ENCODE measurements at regions of chr15 and their contacts with region 1.

Region 1: GRCh38 chr15:74322181-74323076 is 45.0 kb downstream of the CYP11A1 start:
- DNase-seq: peak; percentile 66 to 87 (median 86)
- ATAC-seq: peak; percentile 53 to 66
- H3K4me3 ChIP-seq: no peak overlapping the region
- H3K27ac ChIP-seq: no peak overlapping the region
- H3K4me1 ChIP-seq: peaks cover 4% of the 10 kb centered on the region
- H3K27me3 ChIP-seq: no peaks in the 10 kb centered on the region

Region 2: GRCh38 chr15:73972984-73973682 is 349.3 kb before region 1 on chr15:
- intact Hi-C with region 1: loop called in 3 of 4 experiments (anchors 5 to 10 kb)
- DNase-seq: peak; percentile 86 to 95 (median 92)
- ATAC-seq: peak; percentile 90 to 93
- H3K4me3 ChIP-seq: no peak overlapping the region
- H3K27ac ChIP-seq: no peak overlapping the region
- H3K4me1 ChIP-seq: no peaks in the 10 kb centered on the region
- H3K27me3 ChIP-seq: no peaks in the 10 kb centered on the region

Region 3: GRCh38 chr15:74053941-74054529 is 268.4 kb before region 1 on chr15:
- intact Hi-C with region 1: loop called in 2 of 4 experiments (anchors 5 to 10 kb)
- DNase-seq: peak; percentile 80 to 91 (median 89)
- ATAC-seq: peak; percentile 82 to 85
- H3K4me3 ChIP-seq: no peak overlapping the region
- H3K27ac ChIP-seq: no peak overlapping the region
- H3K4me1 ChIP-seq: no peaks in the 10 kb centered on the region
- H3K27me3 ChIP-seq: no peaks in the 10 kb centered on the region

Region 4: GRCh38 chr15:74365611-74366440 is 43.4 kb after region 1 on chr15:
- intact Hi-C with region 1: no loop called
- DNase-seq: peak; percentile 65 to 87 (median 86)
- ATAC-seq: peak; percentile 87
- H3K4me3 ChIP-seq: peak overlapping the region; percentile 49
- H3K27ac ChIP-seq: peak overlapping the region; percentile 40
- H3K4me1 ChIP-seq: no peaks in the 10 kb centered on the region
- H3K27me3 ChIP-seq: no peaks in the 10 kb centered on the region

Region 5: DNA sequence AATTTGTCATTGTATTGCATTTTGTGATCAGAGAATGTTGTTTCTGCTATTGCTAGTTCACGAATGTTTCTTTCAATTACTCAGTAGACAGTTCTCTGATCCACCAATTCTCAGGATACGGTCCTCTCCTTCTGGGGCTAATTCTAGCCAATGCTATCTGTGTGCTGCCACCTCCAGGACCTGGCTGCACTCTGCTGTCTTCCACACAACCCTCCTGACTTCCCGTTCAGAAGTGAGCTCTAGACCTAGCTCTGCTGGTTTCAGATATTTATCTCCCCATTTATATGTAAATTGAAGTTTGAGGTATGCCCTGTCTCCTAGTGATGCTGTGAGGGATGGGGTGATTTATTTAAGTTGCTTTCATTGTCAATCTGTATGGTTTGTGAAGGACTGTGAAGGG is 160.2 kb after region 1 on chr15:
- intact Hi-C with region 1: no loop called
- DNase-seq: no peak
- ATAC-seq: no peak
- H3K4me3 ChIP-seq: no peak overlapping the region
- H3K27ac ChIP-seq: no peak overlapping the region
- H3K4me1 ChIP-seq: no peaks in the 10 kb centered on the region
- H3K27me3 ChIP-seq: no peaks in the 10 kb centered on the region